Pancreas (tissue), 10 donors: ENCODE measurements at regions of chr16 and their contacts with region 1.

Region 1: GRCh38 chr16:57300387-57301125 is 16.1 kb upstream of the PLLP start:
- DNase-seq: peak; percentile 98 to 99 (median 98)
- ATAC-seq: peak; percentile 88 to 96 (median 92)
- H3K4me3 ChIP-seq: peak overlapping the region in 2 of 4 donors; percentile 30 to 48
- H3K27ac ChIP-seq: peak overlapping the region; percentile 26 to 92 (median 78)
- H3K4me1 ChIP-seq: peaks cover 0 to 7% (median 0%) of the 10 kb centered on the region in 3 donors
- H3K27me3 ChIP-seq: no peaks in the 10 kb centered on the region
- CTCF ChIP-seq: peak; percentile 76 to 93 (median 84)

Region 2: DNA sequence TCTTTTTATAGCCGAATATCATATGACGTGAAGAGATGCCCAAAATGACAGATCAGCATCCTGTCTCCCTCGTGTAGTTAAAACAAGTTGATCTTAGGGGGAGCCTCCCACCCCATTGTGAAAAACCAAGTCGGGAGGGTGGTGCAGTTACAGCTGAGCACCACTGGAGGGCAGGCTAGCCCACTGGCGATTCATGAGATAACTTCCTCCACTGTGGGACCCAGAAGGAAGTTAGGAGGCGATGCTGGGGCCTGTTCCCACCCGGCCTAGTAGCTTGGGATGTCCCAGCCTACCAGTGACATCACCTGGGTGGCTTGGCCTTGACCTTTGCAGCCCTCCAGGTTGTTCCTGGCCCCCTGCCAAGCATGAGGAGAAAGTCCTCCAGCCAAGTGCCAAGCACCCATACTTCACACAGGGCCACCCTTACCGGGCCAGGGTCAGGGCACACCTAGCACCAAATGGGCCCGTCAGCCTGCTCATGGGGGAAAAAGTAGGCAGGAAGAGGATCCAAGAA is 216.2 kb before region 1 on chr16:
- intact Hi-C with region 1: loop called in 1 of 3 experiments (anchors 10 kb)
- DNase-seq: peak; percentile 41 to 85 (median 67)
- ATAC-seq: peak; percentile 81 to 99 (median 92)
- H3K4me3 ChIP-seq: no peak overlapping the region
- H3K27ac ChIP-seq: no peak overlapping the region
- H3K4me1 ChIP-seq: peaks cover 0 to 4% (median 0%) of the 10 kb centered on the region in 3 donors
- H3K27me3 ChIP-seq: no peaks in the 10 kb centered on the region
- CTCF ChIP-seq: peak; percentile 95 to 96 (median 96)

Region 3: GRCh38 chr16:57235128-57236021 is 65.2 kb before region 1 on chr16:
- intact Hi-C with region 1: no loop called
- DNase-seq: no peak
- ATAC-seq: peak; percentile 74 to 88 (median 84)
- H3K4me3 ChIP-seq: no peak overlapping the region
- H3K27ac ChIP-seq: peak overlapping the region in 2 of 4 donors; percentile 41 to 51
- H3K4me1 ChIP-seq: peaks cover 0 to 20% (median 9%) of the 10 kb centered on the region in 3 donors
- H3K27me3 ChIP-seq: no peaks in the 10 kb centered on the region
- CTCF ChIP-seq: no peak

Region 4: GRCh38 chr16:57413301-57413730 is 112.8 kb after region 1 on chr16:
- intact Hi-C with region 1: loop called (anchors 2 to 10 kb)
- DNase-seq: peak in 1 of 6 donors; percentile 39
- ATAC-seq: no peak
- H3K4me3 ChIP-seq: no peak overlapping the region
- H3K27ac ChIP-seq: no peak overlapping the region
- H3K4me1 ChIP-seq: peaks cover 0 to 6% (median 0%) of the 10 kb centered on the region in 3 donors
- H3K27me3 ChIP-seq: no peaks in the 10 kb centered on the region
- CTCF ChIP-seq: no peak

Region 5: DNA sequence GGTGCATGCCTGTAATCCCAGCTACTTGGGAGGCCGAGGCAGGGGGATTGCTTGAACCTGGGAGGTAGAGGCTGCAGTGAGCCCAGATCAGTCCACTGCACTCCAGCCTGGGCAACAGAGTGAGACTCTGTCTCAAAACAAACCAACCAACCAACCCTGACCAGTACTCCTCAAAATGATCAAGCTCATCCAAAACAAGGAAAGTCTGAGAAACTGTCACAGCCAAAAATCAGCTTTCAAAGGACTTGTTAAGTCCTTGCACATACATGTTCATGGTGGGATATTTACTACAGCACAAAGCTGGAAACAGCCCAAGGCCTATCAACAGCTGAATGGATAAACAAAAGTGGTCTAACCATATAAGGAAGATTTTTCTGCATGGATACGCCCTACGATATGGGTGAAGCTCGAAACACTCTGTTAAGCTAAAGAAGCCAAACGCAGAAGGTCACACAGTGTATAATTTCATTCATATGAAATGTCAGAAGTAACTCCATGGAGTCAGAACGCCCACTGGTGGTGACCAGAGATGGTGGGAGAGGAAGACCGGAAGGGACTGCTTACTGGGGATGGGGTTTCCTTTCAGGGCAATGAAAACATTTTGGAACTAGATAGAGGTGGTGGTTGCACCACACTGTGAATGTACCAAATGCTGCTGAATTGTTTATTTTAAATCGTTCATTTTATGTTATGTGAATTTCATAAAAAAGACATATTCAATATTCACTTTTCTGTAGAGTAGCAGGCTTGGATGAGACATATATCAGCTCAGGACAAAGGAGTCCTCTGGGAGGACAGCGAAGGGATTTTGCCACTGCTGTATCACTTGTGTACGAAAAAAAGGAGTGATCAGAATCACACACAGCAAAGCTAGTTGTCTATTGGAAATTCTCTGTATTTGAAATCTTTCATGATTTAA is 121.7 kb after region 1 on chr16:
- intact Hi-C with region 1: loop called (anchors 2 to 10 kb)
- DNase-seq: peak in 5 of 6 donors; percentile 39 to 56 (median 42)
- ATAC-seq: peak in 3 of 4 donors; percentile 71 to 81 (median 72)
- H3K4me3 ChIP-seq: no peak overlapping the region
- H3K27ac ChIP-seq: no peak overlapping the region
- H3K4me1 ChIP-seq: peaks cover 0 to 3% (median 2%) of the 10 kb centered on the region in 3 donors
- H3K27me3 ChIP-seq: no peaks in the 10 kb centered on the region
- CTCF ChIP-seq: peak; percentile 22 to 43 (median 42)

Region 6: GRCh38 chr16:57452021-57452420 is 151.5 kb after region 1 on chr16:
- intact Hi-C with region 1: no loop called
- DNase-seq: no peak
- ATAC-seq: no peak
- H3K4me3 ChIP-seq: no peak overlapping the region
- H3K27ac ChIP-seq: no peak overlapping the region
- H3K4me1 ChIP-seq: peaks cover 0 to 18% (median 11%) of the 10 kb centered on the region in 3 donors
- H3K27me3 ChIP-seq: no peaks in the 10 kb centered on the region
- CTCF ChIP-seq: no peak

Region 7: DNA sequence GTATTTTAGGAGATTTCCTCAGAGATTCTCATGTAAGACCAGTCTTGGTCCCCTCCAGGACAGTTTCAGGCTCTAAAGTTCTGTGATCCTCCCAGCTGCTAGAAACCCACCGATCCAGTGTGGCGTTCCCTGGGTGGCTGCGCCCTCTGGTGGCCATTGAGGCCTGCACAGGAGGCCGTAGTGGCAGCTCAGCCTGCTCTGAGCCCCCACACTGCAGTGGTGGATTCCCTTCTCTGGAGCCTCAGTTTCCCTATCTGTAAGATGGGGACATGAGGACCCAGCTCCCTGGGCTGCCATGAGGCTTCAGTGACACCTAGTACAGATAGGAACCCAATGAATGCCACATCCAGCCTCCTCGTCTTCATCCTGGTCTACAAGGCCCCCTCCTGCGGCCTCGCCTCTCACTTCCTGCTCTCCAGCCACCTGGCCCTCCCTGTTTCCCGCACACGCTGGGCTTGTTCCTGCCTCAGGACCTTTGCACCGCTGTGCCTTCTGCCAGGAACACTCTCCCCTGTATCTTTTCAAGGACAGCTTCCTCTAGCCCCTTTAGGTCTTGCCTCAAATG is 219.3 kb after region 1 on chr16:
- intact Hi-C with region 1: loop called in 2 of 3 experiments (anchors 5 to 10 kb)
- DNase-seq: peak; percentile 57 to 93 (median 80)
- ATAC-seq: peak; percentile 85 to 95 (median 91)
- H3K4me3 ChIP-seq: no peak overlapping the region
- H3K27ac ChIP-seq: no peak overlapping the region
- H3K4me1 ChIP-seq: no peaks in the 10 kb centered on the region
- H3K27me3 ChIP-seq: no peaks in the 10 kb centered on the region
- CTCF ChIP-seq: peak; percentile 94 to 98 (median 96)